ENCODE measurements at regions of chr9 and their contacts with region 1.

Region 1: GRCh38 chr9:137407590-137408300 is 15.2 kb downstream of the EXD3 start:
- DNase-seq: no peak
- H3K4me3 ChIP-seq: no peak overlapping the region
- H3K27me3 ChIP-seq: no peaks in the 10 kb centered on the region
- CTCF ChIP-seq: no peak

Region 2: GRCh38 chr9:136840140-136840687 is 567.5 kb before region 1 on chr9:
- CTCF ChIA-PET with region 1: no interaction called
- POLR2A ChIA-PET with region 1: no interaction called
- DNase-seq: no peak
- H3K4me3 ChIP-seq: no peak overlapping the region
- H3K27me3 ChIP-seq: peaks cover 1% of the 10 kb centered on the region; the same call in 1 of the 2 replicates
- CTCF ChIP-seq: no peak

Region 3: DNA sequence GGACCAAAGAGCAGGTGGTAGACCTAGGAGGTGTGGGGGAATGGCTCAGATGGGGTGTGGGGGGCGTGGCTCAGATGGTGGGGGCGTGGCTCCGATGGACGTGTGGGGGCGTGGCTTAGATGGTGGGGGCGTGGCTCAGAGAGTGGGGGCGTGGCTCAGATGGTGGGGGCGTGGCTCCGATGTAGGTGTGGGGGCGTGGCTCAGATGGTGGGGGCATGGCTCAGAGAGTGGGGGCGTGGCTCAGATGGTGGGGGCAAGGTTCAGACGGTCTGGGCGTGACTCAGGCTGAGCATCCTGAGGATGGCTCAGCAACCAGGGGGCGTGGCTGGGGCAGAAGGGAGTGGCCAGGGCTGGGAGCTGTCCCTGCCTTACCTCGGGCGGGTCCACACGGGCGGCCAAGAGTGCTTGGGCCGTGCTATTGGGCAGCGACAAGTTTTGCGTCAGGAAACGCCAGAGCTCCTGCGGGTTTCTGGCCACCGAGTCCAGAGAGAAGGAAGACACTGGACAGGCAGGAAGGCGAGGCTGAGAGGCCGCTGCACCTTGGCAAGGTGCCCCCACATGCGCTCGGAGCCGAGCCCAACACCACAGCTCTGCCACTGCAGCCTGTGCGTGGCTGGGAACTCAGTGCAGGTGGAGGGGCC is 385.6 kb before region 1 on chr9:
- CTCF ChIA-PET with region 1: no interaction called
- POLR2A ChIA-PET with region 1: no interaction called
- DNase-seq: no peak
- H3K4me3 ChIP-seq: no peak overlapping the region
- H3K27me3 ChIP-seq: no peaks in the 10 kb centered on the region
- CTCF ChIP-seq: no peak

Region 4: DNA sequence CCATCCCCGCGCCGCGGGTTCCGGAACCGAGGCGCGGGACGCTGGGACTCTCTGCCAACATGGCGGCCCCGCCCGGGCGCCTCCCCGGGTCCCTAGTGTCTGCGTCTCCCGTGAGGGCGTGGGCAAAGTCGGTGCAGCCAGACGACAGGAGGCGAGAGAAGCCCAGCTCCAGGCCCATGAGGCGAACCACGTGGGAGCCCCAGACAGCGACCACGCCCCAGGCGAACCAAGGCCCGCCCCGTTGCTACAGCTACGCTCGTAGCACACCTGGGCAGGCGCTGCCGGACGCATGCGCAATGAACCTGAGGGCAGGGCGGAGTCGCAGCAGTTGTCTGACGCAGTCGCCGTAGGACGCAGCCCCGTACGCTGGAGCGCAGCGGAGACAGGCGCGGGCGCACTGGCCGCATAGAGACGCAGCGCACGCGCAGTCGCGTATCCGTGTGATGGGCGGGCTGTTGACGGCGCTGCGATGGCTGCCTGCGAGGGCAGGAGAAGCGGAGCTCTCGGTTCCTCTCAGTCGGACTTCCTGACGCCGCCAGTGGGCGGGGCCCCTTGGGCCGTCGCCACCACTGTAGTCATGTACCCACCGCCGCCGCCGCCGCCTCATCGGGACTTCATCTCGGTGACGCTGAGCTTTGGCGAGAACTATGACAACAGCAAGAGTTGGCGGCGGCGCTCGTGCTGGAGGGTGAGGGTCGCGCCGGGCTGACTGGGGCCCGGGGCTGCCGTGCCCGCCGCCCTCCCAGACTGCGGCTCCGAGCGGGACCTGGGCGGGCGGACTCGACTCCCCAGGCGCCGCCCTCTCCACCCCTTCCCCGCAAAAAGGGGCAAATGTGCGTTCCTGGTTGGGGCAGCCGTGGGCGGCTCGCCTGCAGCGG is 321.0 kb before region 1 on chr9 and contains the start of gene MAN1B1:
- CTCF ChIA-PET with region 1: no interaction called
- POLR2A ChIA-PET with region 1: no interaction called
- DNase-seq: peak; percentile 96
- H3K4me3 ChIP-seq: peak within 1 kb of the TSS; percentile 64
- H3K27me3 ChIP-seq: no peaks in the 10 kb centered on the region
- CTCF ChIP-seq: no peak
- polyA plus RNA-seq, gene MAN1B1: 53.0 and 80.0 TPM in 2 replicates

Region 5: DNA sequence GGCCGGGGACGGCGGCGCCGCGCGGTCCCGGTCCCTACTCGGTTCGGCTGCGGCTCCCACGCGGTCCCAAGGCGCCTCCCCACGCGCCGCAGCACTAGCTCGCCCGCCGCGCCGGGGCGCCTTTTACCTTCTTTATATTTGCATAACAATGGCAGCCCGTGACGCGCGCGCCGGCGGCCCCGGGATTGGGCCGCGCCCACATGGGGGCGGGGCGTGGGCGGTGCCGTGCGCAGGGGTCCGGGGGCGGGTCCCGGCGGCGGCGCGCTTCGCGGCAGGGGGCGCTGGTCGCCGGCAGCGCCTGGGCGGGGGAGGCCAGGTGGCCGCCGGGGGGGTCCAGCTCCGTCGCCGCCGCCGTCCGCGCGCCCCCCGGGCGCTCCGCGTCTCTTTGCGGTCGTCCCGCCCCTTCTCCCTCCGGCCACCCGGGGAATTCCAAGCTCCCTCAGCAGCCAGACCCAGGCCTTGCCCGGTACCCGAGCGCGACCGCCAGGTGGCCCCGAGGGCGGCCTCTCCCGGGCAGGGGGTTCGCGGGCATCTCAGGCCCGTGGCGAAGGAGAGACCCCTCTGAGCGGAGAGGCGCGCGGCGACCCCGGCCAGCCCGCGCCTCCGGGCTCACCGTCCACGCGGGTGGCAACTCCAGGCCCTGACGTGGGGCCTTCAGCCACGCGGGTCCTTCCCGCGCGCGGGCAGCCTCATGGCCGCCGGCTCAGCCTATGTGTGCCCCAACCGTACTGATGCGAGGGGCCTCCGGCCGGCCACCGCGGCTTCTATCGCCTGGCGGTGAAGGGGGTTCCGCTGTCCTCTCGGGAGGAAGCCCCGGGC is 105.4 kb before region 1 on chr9 and contains the start of gene NRARP:
- CTCF ChIA-PET with region 1: interaction called, 10 read pairs
- POLR2A ChIA-PET with region 1: no interaction called
- DNase-seq: no peak
- H3K4me3 ChIP-seq: peak within 1 kb of the TSS; percentile 40
- H3K27me3 ChIP-seq: peaks cover 18% of the 10 kb centered on the region
- CTCF ChIP-seq: peak; percentile 60
- polyA plus RNA-seq, gene NRARP: 0.17 TPM in 2 replicates

Region 6: DNA sequence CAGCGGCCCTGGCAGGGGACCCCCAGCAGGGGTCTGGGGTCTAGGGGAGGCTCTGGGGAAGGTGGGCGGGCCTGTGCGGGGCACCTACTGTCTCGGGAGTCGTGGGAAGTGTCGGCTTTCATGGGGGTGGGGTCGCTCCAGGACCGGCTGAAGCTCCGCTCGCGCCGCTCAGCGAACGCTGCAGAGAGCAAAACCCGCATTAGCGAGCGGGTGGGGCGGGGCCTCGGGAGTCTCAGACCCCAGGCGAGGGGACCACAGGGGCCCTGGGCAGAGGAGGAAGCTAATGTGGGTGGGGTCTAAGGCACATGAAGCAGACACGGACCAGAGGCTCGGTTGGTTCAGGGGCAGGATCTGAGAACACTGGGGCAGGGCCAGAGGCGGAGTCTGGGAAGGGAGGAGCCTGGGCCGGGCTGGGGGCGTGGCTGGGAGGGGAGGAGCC is 45.9 kb after region 1 on chr9:
- CTCF ChIA-PET with region 1: no interaction called
- POLR2A ChIA-PET with region 1: no interaction called
- DNase-seq: no peak
- H3K4me3 ChIP-seq: peak overlapping the region; percentile 33
- H3K27me3 ChIP-seq: no peaks in the 10 kb centered on the region
- CTCF ChIP-seq: no peak

Measured in BJ (cell line).